Naive thymus-derived CD4-positive, alpha-beta T cell (primary cell): ENCODE measurements at regions of chr14 and their contacts with region 1.

Region 1: GRCh38 chr14:104768437-104769323 is 15.7 kb downstream of the SIVA1 start:
- DNase-seq: peak; percentile 78 to 96 (median 87)
- ATAC-seq: peak; percentile 96
- H3K4me3 ChIP-seq: no peak overlapping the region
- H3K4me3 Mint-ChIP-seq: peak overlapping the region in 1 of 10 donors; percentile 37
- H3K27ac ChIP-seq: no peak overlapping the region
- H3K27ac Mint-ChIP-seq: no peak overlapping the region
- H3K4me1 ChIP-seq: no peaks in the 10 kb centered on the region
- H3K4me1 Mint-ChIP-seq: peaks cover 0 to 10% (median 2%) of the 10 kb centered on the region in 7 donors
- H3K27me3 ChIP-seq: no peaks in the 10 kb centered on the region
- H3K27me3 Mint-ChIP-seq: no peaks in the 10 kb centered on the region

Region 2: GRCh38 chr14:104277416-104278213 is 491.1 kb before region 1 on chr14:
- CTCF ChIA-PET with region 1: no interaction called
- POLR2A ChIA-PET with region 1: no interaction called
- intact Hi-C with region 1: no loop called
- DNase-seq: peak in 1 of 9 donors; percentile 3
- ATAC-seq: no peak
- H3K4me3 ChIP-seq: no peak overlapping the region
- H3K4me3 Mint-ChIP-seq: no peak overlapping the region
- H3K27ac ChIP-seq: no peak overlapping the region
- H3K27ac Mint-ChIP-seq: peak overlapping the region in 1 of 9 donors; percentile 8
- H3K4me1 ChIP-seq: no peaks in the 10 kb centered on the region
- H3K4me1 Mint-ChIP-seq: peaks cover 0 to 4% (median 0%) of the 10 kb centered on the region in 7 donors
- H3K27me3 ChIP-seq: no peaks in the 10 kb centered on the region
- H3K27me3 Mint-ChIP-seq: peaks cover 0 to 19% (median 10%) of the 10 kb centered on the region in 5 donors

Region 3: GRCh38 chr14:104723648-104724406 is 44.9 kb before region 1 on chr14 and contains the start of gene ADSS1:
- CTCF ChIA-PET with region 1: no interaction called
- POLR2A ChIA-PET with region 1: no interaction called
- intact Hi-C with region 1: loop called in 1 of 2 experiments (anchors 5 kb)
- DNase-seq: peak; percentile 39 to 79 (median 68)
- ATAC-seq: peak; percentile 89
- H3K4me3 ChIP-seq: peak within 1 kb of the TSS; percentile 70
- H3K4me3 Mint-ChIP-seq: peak within 1 kb of the TSS; percentile 43 to 80 (median 63)
- H3K27ac ChIP-seq: peak within 1 kb of the TSS; percentile 58
- H3K27ac Mint-ChIP-seq: peak within 1 kb of the TSS in 1 of 9 donors; percentile 22
- H3K4me1 ChIP-seq: peaks cover 0 to 6% of the 10 kb centered on the region in 2 donors
- H3K4me1 Mint-ChIP-seq: peaks cover 0 to 7% (median 0%) of the 10 kb centered on the region in 7 donors
- H3K27me3 ChIP-seq: no peaks in the 10 kb centered on the region
- H3K27me3 Mint-ChIP-seq: no peaks in the 10 kb centered on the region
- total RNA-seq, gene ADSS1: 0.73 to 4.8 (median 4.2) TPM

Region 4: GRCh38 chr14:104800015-104800770 is 31.5 kb after region 1 on chr14:
- CTCF ChIA-PET with region 1: interaction called, 4 read pairs
- POLR2A ChIA-PET with region 1: interaction called, 7 read pairs
- intact Hi-C with region 1: loop called (anchors 1 kb)
- DNase-seq: peak in 8 of 9 donors; percentile 55 to 85 (median 68)
- ATAC-seq: peak; percentile 82
- H3K4me3 ChIP-seq: peak overlapping the region; percentile 41
- H3K4me3 Mint-ChIP-seq: peak overlapping the region; percentile 59 to 90 (median 73)
- H3K27ac ChIP-seq: peak overlapping the region; percentile 70
- H3K27ac Mint-ChIP-seq: peak overlapping the region; percentile 32 to 94 (median 88)
- H3K4me1 ChIP-seq: peaks cover 20 to 27% of the 10 kb centered on the region in 2 donors
- H3K4me1 Mint-ChIP-seq: peaks cover 16 to 47% (median 32%) of the 10 kb centered on the region in 7 donors
- H3K27me3 ChIP-seq: no peaks in the 10 kb centered on the region
- H3K27me3 Mint-ChIP-seq: peaks cover 0 to 2% (median 0%) of the 10 kb centered on the region in 5 donors

Region 5: GRCh38 chr14:104826189-104826860 is 57.6 kb after region 1 on chr14:
- CTCF ChIA-PET with region 1: interaction called, 26 read pairs
- POLR2A ChIA-PET with region 1: interaction called, 12 read pairs
- intact Hi-C with region 1: loop called (anchors 1 kb)
- DNase-seq: peak; percentile 84 to 100 (median 93)
- ATAC-seq: peak; percentile 96
- H3K4me3 ChIP-seq: peak overlapping the region; percentile 71
- H3K4me3 Mint-ChIP-seq: peak overlapping the region; percentile 64 to 91 (median 84)
- H3K27ac ChIP-seq: peak overlapping the region; percentile 46
- H3K27ac Mint-ChIP-seq: peak overlapping the region in 4 of 9 donors; percentile 46 to 80 (median 73)
- H3K4me1 ChIP-seq: peaks cover 10 to 12% of the 10 kb centered on the region in 2 donors
- H3K4me1 Mint-ChIP-seq: peaks cover 12 to 26% (median 15%) of the 10 kb centered on the region in 7 donors
- H3K27me3 ChIP-seq: no peaks in the 10 kb centered on the region
- H3K27me3 Mint-ChIP-seq: peaks cover 0 to 33% (median 0%) of the 10 kb centered on the region in 5 donors

Region 6: GRCh38 chr14:104865644-104866441 is 97.2 kb after region 1 on chr14:
- CTCF ChIA-PET with region 1: interaction called, 3 read pairs
- POLR2A ChIA-PET with region 1: no interaction called
- intact Hi-C with region 1: loop called (anchors 1 kb)
- DNase-seq: peak in 1 of 9 donors; percentile 67
- ATAC-seq: peak; percentile 36
- H3K4me3 ChIP-seq: peak overlapping the region; percentile 24
- H3K4me3 Mint-ChIP-seq: peak overlapping the region in 9 of 10 donors; percentile 16 to 79 (median 69)
- H3K27ac ChIP-seq: peak overlapping the region; percentile 25
- H3K27ac Mint-ChIP-seq: peak overlapping the region in 1 of 9 donors; percentile 18
- H3K4me1 ChIP-seq: no peaks in the 10 kb centered on the region
- H3K4me1 Mint-ChIP-seq: peaks cover 0 to 9% (median 4%) of the 10 kb centered on the region in 7 donors
- H3K27me3 ChIP-seq: no peaks in the 10 kb centered on the region
- H3K27me3 Mint-ChIP-seq: peaks cover 0 to 23% (median 7%) of the 10 kb centered on the region in 5 donors

Region 7: DNA sequence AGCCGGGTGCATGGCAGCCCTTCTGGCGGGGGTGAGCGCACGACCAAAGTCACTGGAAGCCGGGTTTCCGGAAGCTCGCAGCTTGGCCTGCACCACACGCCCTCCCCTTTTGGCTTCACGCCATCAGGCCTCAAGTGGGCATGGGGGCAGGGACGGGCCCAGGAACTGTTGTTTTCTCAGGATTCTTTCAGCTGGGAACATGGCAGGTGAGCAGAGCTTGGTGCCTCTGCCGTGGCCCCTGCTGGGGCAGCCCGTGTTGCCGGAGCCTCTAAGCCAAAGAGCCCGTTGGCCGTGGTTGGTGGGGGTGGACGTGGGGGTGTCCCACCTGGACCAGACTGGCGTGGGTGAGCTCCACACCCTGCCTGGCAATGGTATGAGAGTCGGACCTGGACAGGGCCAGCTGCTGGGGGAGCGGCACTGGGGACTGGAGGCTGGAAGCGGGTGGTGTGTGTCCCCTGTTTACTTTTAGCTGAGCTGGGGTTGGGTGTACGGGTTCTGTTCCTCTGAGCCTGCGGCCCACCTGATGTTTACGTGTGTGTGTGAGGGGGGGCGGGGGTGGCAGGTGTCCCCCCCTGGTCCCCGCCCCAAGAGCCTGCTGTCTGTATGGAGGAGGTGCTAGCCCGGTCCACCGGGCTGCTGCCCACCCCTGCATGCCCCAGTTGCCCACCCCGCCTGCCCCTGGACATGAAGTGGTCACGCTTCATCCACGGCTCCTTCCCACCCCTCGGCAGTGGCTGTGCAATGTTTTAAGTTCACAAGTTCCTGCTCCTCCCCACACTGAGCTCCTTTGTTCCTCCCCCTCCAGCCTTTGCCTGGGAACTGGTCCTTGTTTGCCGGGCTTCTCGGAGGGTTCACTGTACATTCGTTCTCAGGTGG is 127.3 kb after region 1 on chr14:
- CTCF ChIA-PET with region 1: interaction called, 3 read pairs
- POLR2A ChIA-PET with region 1: no interaction called
- intact Hi-C with region 1: loop called in 1 of 2 experiments (anchors 1 kb)
- DNase-seq: peak in 1 of 9 donors; percentile 18
- ATAC-seq: no peak
- H3K4me3 ChIP-seq: no peak overlapping the region
- H3K4me3 Mint-ChIP-seq: no peak overlapping the region
- H3K27ac ChIP-seq: no peak overlapping the region
- H3K27ac Mint-ChIP-seq: no peak overlapping the region
- H3K4me1 ChIP-seq: no peaks in the 10 kb centered on the region
- H3K4me1 Mint-ChIP-seq: peaks cover 0 to 4% (median 0%) of the 10 kb centered on the region in 7 donors
- H3K27me3 ChIP-seq: no peaks in the 10 kb centered on the region
- H3K27me3 Mint-ChIP-seq: peaks cover 0 to 6% (median 0%) of the 10 kb centered on the region in 5 donors